Activated CD8-positive, alpha-beta T cell treated with anti-CD3 and anti-CD28 coated beads for 36 hours (primary cell): ENCODE measurements at regions of chr2 and their contacts with region 1.

Region 1: DNA sequence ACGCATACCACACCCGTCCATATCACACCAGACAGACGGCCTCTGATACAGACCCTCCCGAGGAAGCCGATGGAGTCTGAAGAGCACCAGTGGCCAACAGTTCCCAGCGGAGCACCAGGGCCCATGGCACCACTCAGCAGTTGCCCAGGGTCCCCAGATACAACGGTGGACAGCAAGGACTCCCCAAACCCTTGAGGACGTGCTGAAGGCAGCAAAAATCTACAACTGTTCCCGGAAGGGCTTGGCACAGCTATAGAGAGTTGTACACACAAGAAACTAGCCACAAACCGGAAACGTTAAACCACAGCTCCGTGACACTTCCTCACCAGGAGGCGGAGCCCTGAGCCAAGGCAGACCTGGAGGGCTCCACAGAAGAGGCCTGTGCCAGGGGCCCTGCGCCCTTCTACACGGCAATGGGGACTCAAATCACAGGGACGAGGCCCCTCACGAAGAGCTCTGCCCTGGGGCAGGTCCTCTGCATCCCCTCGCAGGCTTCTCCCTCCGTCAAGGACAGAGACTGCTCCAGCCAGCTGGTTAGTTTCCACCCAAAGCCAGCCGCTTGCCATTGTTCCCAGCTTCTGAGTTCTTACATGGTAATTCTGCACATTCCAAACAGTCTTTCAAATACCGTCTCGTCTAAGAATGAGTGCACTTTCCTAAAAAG is 133.4 kb downstream of the HDAC4 start:
- DNase-seq: peak; percentile 98
- ATAC-seq: peak; percentile 75
- H3K4me3 Mint-ChIP-seq: peak overlapping the region; percentile 79
- H3K27ac Mint-ChIP-seq: peak overlapping the region; percentile 94
- H3K4me1 Mint-ChIP-seq: peaks cover 65% of the 10 kb centered on the region
- H3K27me3 Mint-ChIP-seq: peaks cover 6% of the 10 kb centered on the region
- CTCF ChIP-seq: no peak

Region 2: DNA sequence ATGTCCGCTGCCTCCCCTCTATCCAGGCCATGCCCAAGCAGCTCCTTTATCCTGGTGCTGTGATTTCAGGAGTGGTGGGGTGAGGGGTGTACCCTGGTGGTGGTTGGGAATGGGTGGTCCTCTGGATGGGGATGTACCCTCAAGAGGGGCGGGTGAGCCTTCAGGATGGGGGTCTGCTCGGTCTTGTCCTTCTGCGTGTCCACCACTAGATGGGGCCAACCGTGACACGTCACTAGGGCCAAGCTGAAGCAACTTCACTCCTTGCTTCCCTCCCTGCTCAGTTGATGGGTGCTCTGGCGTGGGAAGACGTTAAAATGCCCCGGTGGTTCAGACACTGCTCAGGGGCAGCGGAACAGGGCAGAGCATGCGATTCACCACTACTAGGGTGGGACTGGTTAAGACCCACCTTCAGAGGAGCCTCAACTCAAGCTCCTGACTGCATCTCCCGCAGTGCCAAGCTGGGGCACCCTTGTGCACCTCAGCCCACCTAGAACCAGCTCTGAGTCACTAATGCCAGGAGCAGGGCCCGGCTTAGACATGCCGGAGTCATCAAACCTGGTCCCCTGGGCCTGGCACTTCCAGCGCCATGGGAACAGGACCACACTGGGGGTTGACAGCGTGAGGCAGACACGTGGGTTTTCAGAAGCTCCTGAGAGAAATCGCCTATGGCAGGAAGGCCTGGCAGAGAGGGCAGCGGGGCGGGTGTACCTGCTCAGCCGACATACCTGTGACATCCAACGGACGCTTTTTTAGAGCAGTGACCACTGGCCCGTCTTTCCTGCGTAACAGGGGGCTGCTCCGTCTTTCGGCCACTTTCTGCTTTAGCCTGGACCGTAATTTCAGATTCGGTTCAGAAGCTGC is 123.3 kb before region 1 on chr2:
- CTCF ChIA-PET with region 1: interaction called, 10 read pairs
- POLR2A ChIA-PET with region 1: no interaction called
- intact Hi-C with region 1: no loop called
- DNase-seq: peak; percentile 44
- ATAC-seq: peak; percentile 88
- H3K4me3 Mint-ChIP-seq: no peak overlapping the region
- H3K27ac Mint-ChIP-seq: no peak overlapping the region
- H3K4me1 Mint-ChIP-seq: no peaks in the 10 kb centered on the region
- H3K27me3 Mint-ChIP-seq: no peaks in the 10 kb centered on the region
- CTCF ChIP-seq: peak; percentile 55

Region 3: GRCh38 chr2:239288951-239289511 is 21.6 kb after region 1 on chr2:
- CTCF ChIA-PET with region 1: interaction called, 31 read pairs
- POLR2A ChIA-PET with region 1: interaction called, 5 read pairs
- intact Hi-C with region 1: no loop called
- DNase-seq: peak; percentile 77
- ATAC-seq: peak; percentile 58
- H3K4me3 Mint-ChIP-seq: peak overlapping the region; percentile 59
- H3K27ac Mint-ChIP-seq: peak overlapping the region; percentile 94
- H3K4me1 Mint-ChIP-seq: peaks cover 74% of the 10 kb centered on the region
- H3K27me3 Mint-ChIP-seq: peaks cover 1% of the 10 kb centered on the region
- CTCF ChIP-seq: no peak

Region 4: GRCh38 chr2:239303711-239304532 is 36.5 kb after region 1 on chr2:
- CTCF ChIA-PET with region 1: interaction called, 4 read pairs
- POLR2A ChIA-PET with region 1: interaction called, 5 read pairs
- intact Hi-C with region 1: loop called (anchors 5 kb)
- DNase-seq: peak; percentile 58
- ATAC-seq: peak; percentile 85
- H3K4me3 Mint-ChIP-seq: no peak overlapping the region
- H3K27ac Mint-ChIP-seq: peak overlapping the region; percentile 46
- H3K4me1 Mint-ChIP-seq: peaks cover 29% of the 10 kb centered on the region
- H3K27me3 Mint-ChIP-seq: no peaks in the 10 kb centered on the region
- CTCF ChIP-seq: no peak

Region 5: DNA sequence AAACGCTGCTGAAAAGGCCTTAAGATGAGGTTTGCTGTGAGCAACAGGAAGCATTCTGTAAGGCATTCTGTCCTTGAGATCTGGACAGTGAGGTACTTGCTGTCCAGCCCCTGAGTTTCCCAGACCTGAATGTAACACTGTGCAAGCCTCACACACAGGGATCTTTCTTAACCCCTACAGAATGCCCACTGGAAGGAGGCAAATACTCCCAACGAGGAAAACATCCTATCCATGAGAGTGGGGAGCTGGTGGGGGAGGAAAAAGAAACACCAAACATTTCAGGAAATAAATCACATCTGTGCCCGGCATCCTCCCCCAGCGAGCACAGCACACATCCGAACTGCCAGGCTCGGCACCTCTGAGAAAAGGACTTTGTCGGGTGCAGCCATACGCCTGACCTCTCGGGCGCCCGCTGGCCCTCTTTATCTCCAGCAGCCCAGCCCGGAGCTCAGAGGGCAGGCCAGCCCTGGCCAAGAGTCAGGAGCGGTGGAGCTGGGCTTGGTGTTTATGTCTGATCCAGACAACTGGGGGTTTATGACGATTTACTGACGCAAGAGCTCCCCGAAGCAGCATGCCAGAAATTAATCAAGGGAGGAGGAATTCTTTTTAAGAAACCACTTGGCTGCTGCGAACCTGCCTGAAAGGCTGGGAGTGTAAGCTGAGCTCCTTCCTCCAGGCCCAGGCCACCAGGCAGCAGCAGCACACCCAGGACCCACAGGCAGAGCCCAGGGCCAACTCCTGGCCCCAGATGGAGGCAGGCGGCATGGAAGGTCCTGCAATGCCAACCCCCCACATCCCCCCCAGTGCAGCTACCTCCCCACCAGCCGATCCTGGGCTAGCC is 61.2 kb after region 1 on chr2:
- CTCF ChIA-PET with region 1: no interaction called
- POLR2A ChIA-PET with region 1: no interaction called
- intact Hi-C with region 1: no loop called
- DNase-seq: no peak
- ATAC-seq: no peak
- H3K4me3 Mint-ChIP-seq: no peak overlapping the region
- H3K27ac Mint-ChIP-seq: peak overlapping the region; percentile 83
- H3K4me1 Mint-ChIP-seq: peaks cover 60% of the 10 kb centered on the region
- H3K27me3 Mint-ChIP-seq: no peaks in the 10 kb centered on the region
- CTCF ChIP-seq: no peak